Transverse colon (tissue), 4 donors: ENCODE measurements at regions of chr18 and their contacts with region 1.

Region 1: DNA sequence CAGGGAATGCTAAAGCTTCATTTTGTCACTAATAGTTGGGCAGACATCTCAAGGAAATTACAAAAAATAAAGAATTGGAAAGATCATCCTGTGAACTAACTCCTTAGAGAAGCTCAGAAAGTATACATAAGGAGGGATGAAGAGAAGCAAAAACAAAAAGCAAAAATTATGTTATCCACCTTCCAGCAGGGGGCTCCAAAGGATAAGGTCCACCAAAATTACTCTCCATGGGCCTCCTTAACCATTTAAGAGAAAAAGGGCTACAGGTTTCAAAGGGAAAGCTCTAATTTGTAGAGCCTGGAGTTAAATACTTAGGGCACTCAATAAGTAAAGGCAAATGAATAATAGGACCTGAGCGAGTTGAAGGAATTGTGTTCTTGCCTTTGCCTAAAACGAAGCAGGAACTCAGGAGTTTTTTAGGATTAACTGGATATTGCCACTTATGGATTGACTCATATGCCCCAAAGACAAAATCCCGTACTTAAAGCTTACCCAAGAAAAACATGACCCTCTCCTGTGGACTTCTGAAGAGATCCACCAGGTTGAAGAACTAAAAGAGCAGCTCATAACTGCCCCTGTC is 1167.9 kb downstream of the DSC3 start:
- DNase-seq: no peak
- H3K4me3 ChIP-seq: no peak overlapping the region
- H3K27ac ChIP-seq: no peak overlapping the region
- H3K4me1 ChIP-seq: no peaks in the 10 kb centered on the region
- H3K27me3 ChIP-seq: no peaks in the 10 kb centered on the region
- CTCF ChIP-seq: peak; percentile 16 to 34 (median 24)
- EP300 ChIP-seq: no peak
- POLR2A ChIP-seq: no peak

Region 2: GRCh38 chr18:30280880-30281470 is 406.4 kb after region 1 on chr18:
- in situ Hi-C with region 1: loop called in 1 of 4 experiments (anchors 25 kb)
- intact Hi-C with region 1: no loop called
- DNase-seq: no peak
- H3K4me3 ChIP-seq: no peak overlapping the region
- H3K27ac ChIP-seq: no peak overlapping the region
- H3K4me1 ChIP-seq: no peaks in the 10 kb centered on the region
- H3K27me3 ChIP-seq: no peaks in the 10 kb centered on the region
- CTCF ChIP-seq: peak; percentile 15 to 61 (median 38)
- EP300 ChIP-seq: no peak
- POLR2A ChIP-seq: no peak

Region 3: GRCh38 chr18:30889519-30890301 is 1015.1 kb after region 1 on chr18:
- in situ Hi-C with region 1: loop called in 1 of 4 experiments (anchors 25 kb)
- intact Hi-C with region 1: no loop called
- DNase-seq: no peak
- H3K4me3 ChIP-seq: no peak overlapping the region
- H3K27ac ChIP-seq: no peak overlapping the region
- H3K4me1 ChIP-seq: no peaks in the 10 kb centered on the region
- H3K27me3 ChIP-seq: no peaks in the 10 kb centered on the region
- CTCF ChIP-seq: peak in 2 of 5 experiments; percentile 3 to 12
- EP300 ChIP-seq: no peak
- POLR2A ChIP-seq: no peak